ENCODE measurements at regions of chr2 and their contacts with region 1.

Region 1: GRCh38 chr2:165203689-165204559 is at the start of gene SCN3A:
- DNase-seq: peak in 1 of 5 donors; percentile 23
- ATAC-seq: no peak
- H3K4me3 ChIP-seq: peak within 1 kb of the TSS in 8 of 12 donors; percentile 2 to 46 (median 32)
- H3K27ac ChIP-seq: no peak within 1 kb of the TSS
- H3K4me1 ChIP-seq: no peaks in the 10 kb centered on the region
- H3K27me3 ChIP-seq: no peaks in the 10 kb centered on the region
- CTCF ChIP-seq: peak; percentile 50 to 80 (median 62)
- POLR2A ChIP-seq: no peak
- total RNA-seq, gene SCN3A: 0.56 to 2.7 (median 1.1) TPM

Region 2: DNA sequence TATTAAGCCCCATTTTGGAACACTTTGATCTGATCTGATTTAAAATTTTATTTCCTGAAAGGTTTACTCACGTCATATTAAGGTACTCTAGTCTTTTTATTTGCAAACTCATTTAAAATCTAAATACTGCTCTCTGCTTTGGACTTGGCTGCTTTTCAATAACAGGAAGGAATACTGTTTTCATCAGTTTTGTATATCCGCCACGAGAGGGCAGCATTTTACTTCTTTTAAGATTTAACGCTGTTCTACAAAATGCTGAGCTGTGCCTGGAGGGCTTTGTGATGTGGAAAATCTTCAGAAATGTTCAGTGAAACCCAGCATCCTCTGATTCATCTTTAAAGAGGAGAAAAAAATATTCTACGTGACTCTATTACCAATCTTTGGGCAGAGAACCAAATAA is 211.1 kb before region 1 on chr2:
- intact Hi-C with region 1: loop called in 2 of 10 experiments (anchors 5 kb)
- DNase-seq: peak in 2 of 5 donors; percentile 55 to 60
- ATAC-seq: peak in 3 of 4 donors; percentile 54 to 74 (median 66)
- H3K4me3 ChIP-seq: no peak overlapping the region
- H3K27ac ChIP-seq: no peak overlapping the region
- H3K4me1 ChIP-seq: peaks cover 0 to 18% (median 7%) of the 10 kb centered on the region in 12 donors
- H3K27me3 ChIP-seq: no peaks in the 10 kb centered on the region
- CTCF ChIP-seq: peak; percentile 40 to 77 (median 60)
- POLR2A ChIP-seq: no peak

Region 3: GRCh38 chr2:165015052-165015642 is 188.8 kb before region 1 on chr2:
- intact Hi-C with region 1: loop called (anchors 1 to 5 kb)
- DNase-seq: peak; percentile 50 to 68 (median 64)
- ATAC-seq: peak; percentile 42 to 69 (median 64)
- H3K4me3 ChIP-seq: no peak overlapping the region
- H3K27ac ChIP-seq: no peak overlapping the region
- H3K4me1 ChIP-seq: peaks cover 0 to 6% (median 0%) of the 10 kb centered on the region in 12 donors
- H3K27me3 ChIP-seq: peaks cover 0 to 8% (median 0%) of the 10 kb centered on the region in 9 donors
- CTCF ChIP-seq: peak; percentile 73 to 90 (median 86)
- POLR2A ChIP-seq: no peak

Region 4: GRCh38 chr2:165173215-165173614 is 30.7 kb before region 1 on chr2:
- intact Hi-C with region 1: no loop called
- DNase-seq: no peak
- ATAC-seq: no peak
- H3K4me3 ChIP-seq: no peak overlapping the region
- H3K27ac ChIP-seq: no peak overlapping the region
- H3K4me1 ChIP-seq: no peaks in the 10 kb centered on the region
- H3K27me3 ChIP-seq: no peaks in the 10 kb centered on the region
- CTCF ChIP-seq: no peak
- POLR2A ChIP-seq: no peak

Measured in heart left ventricle (tissue), 16 donors.